ENCODE measurements at regions of chr5 and their contacts with region 1.

Region 1: GRCh38 chr5:140113699-140114263 is at the start of gene PURA:
- DNase-seq: peak; percentile 97
- H3K4me3 ChIP-seq: peak within 1 kb of the TSS; percentile 86
- H3K27ac ChIP-seq: peak within 1 kb of the TSS; percentile 68
- H3K4me1 ChIP-seq: peaks cover 74% of the 10 kb centered on the region
- CTCF ChIP-seq: peak; percentile 68
- total RNA-seq, gene PURA: 19.3 and 19.7 TPM in 2 replicates

Region 2: GRCh38 chr5:139822553-139823425 is 291.0 kb before region 1 on chr5:
- CTCF ChIA-PET with region 1: no interaction called
- POLR2A ChIA-PET with region 1: no interaction called
- intact Hi-C with region 1: no loop called
- DNase-seq: no peak
- H3K4me3 ChIP-seq: no peak overlapping the region
- H3K27ac ChIP-seq: no peak overlapping the region
- H3K4me1 ChIP-seq: no peaks in the 10 kb centered on the region
- CTCF ChIP-seq: no peak

Region 3: GRCh38 chr5:140174465-140175366 is 60.9 kb after region 1 on chr5 and contains the start of gene CYSTM1:
- CTCF ChIA-PET with region 1: no interaction called
- POLR2A ChIA-PET with region 1: interaction called, 4 read pairs
- intact Hi-C with region 1: loop called (anchors 1 kb)
- DNase-seq: peak; percentile 95
- H3K4me3 ChIP-seq: peak within 1 kb of the TSS; percentile 94
- H3K27ac ChIP-seq: peak within 1 kb of the TSS; percentile 46
- H3K4me1 ChIP-seq: peaks cover 10% of the 10 kb centered on the region
- CTCF ChIP-seq: no peak
- total RNA-seq, gene CYSTM1: 11.4 and 36.7 TPM in 2 replicates